Activated CD4-positive, alpha-beta T cell treated with anti-CD3 and anti-CD28 coated beads, Interleukin-2, amount 10 ng/mL, durations not matched to agents 24 days and 14 days (primary cell): ENCODE measurements at regions of chr2 and their contacts with region 1.

Region 1: DNA sequence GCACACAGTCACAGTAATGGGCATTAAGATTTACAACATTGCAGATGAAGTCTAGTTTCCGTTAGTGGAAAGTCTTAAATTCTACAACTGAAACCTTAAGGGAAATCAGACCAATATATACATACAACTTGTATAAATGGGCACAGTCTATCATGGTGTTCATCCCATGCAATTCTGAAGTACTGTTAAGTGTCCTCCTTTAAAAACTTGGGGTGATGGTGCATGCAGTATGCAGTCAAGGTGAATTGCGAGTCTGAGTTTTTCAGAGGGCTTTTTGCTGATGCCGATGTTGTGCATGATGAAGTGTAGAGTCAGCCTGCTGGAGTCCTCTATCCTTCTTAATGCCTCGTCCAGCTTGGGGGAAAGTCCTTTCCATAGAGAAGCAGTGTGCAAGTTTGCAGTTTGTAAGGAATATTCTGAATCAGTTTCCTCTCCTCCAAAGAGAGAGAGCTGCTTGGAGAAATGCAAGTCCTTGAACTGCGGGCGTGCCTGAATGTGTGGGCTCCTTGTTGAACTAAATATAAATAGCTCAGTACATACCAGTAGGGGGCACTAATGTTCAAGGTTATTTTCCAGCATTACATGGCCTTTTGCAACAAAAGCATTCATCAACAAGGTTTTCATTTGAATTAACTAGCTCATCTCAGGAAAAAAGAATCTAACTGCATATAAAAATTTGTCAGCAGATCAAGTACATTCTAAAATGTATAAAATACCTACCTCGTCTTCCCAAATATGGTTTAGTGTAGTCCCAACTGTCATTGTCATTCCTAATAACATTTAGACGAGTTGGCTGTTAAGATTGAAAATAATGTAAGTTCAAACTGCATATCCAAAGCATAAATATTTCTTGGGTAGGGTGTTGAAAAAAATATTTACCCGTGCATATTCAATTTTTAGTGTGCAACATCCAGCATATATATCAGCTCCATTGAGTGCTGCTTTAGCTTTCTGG is 21.3 kb downstream of the HNRNPLL start:
- DNase-seq: peak; percentile 83
- H3K4me3 Mint-ChIP-seq: no peak overlapping the region
- H3K27ac Mint-ChIP-seq: peak overlapping the region; percentile 22
- H3K4me1 Mint-ChIP-seq: peaks cover 26% of the 10 kb centered on the region
- H3K27me3 Mint-ChIP-seq: no peaks in the 10 kb centered on the region

Region 2: GRCh38 chr2:38740851-38741731 is 159.6 kb after region 1 on chr2:
- intact Hi-C with region 1: loop called (anchors 2 kb)
- DNase-seq: peak; percentile 67
- H3K4me3 Mint-ChIP-seq: no peak overlapping the region
- H3K27ac Mint-ChIP-seq: peak overlapping the region; percentile 13
- H3K4me1 Mint-ChIP-seq: peaks cover 28% of the 10 kb centered on the region
- H3K27me3 Mint-ChIP-seq: no peaks in the 10 kb centered on the region